Activated CD8-positive, alpha-beta T cell treated with anti-CD3 and anti-CD28 coated beads for 36 hours (primary cell): ENCODE measurements at regions of chr5 and their contacts with region 1.

Region 1: DNA sequence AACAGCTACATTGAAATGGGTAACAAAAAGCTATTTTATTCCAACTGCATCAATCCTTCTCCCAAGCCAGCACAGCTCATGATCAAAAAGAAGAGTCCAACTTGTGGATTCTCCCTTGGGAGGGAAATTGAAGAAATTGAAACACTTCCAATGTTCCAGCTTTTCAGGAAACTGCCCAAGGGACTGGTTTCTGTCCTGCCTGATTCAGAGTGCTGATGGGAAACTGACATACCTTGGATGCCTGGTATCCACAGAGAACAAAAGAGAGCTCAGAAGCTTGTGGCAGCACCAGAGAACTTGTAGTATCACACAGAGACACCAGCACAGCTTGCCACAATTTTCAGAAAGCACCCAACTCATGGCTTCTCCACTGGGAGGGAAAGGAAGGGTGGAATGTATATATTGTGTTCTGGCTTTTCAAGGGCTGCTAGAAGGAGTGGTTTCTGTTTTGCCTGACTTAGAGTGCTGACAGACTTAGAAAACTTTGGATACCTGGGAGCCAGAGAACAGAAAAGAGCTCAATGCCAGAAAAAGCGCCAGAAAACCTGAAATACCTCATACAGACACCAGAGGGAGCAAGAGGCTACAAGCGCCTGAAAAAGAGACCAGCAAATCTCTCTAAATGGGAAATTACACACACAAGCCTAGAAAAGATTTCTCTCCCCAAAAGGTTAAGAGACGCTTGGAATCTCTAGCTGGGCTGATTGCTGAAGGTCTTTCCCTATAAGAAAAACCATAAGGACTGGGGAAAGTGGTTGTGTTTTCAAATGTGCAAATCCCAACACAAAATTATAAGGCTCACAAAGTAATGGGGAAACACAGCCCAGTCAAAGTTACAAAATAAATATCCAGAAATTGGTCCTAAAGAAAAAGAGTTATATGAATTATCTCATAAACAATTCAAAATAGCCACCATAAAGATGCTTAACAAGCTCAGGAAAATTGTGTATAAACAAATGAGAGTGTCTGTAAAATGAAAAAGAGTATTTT is 178.8 kb downstream of the SPOCK1 start:
- DNase-seq: peak; percentile 27
- ATAC-seq: no peak
- H3K4me3 Mint-ChIP-seq: no peak overlapping the region
- H3K27ac Mint-ChIP-seq: no peak overlapping the region
- H3K4me1 Mint-ChIP-seq: no peaks in the 10 kb centered on the region
- H3K27me3 Mint-ChIP-seq: peaks cover 7% of the 10 kb centered on the region
- CTCF ChIP-seq: peak; percentile 58

Region 2: DNA sequence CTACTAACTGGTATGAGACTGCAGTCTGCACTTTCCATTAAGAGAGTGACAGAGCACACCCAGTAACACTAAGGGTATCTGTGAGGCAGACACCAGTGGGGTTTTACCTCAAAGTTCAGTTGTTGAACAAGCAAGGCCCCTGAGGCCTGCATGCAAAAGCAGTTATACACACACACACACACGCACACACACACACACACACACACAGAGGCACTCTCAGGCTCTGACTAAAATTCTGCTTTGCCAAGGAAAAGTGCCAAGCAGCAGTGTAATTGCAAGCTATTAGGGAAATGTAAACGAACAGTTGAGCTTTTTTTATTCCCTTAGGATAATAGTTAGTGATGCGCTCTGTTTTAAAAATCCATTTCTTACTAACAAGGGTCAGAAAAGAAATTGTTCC is 198.3 kb before region 1 on chr5:
- CTCF ChIA-PET with region 1: no interaction called
- POLR2A ChIA-PET with region 1: no interaction called
- intact Hi-C with region 1: no loop called
- DNase-seq: no peak
- ATAC-seq: no peak
- H3K4me3 Mint-ChIP-seq: no peak overlapping the region
- H3K27ac Mint-ChIP-seq: no peak overlapping the region
- H3K4me1 Mint-ChIP-seq: no peaks in the 10 kb centered on the region
- H3K27me3 Mint-ChIP-seq: peaks cover 4% of the 10 kb centered on the region
- CTCF ChIP-seq: no peak

Region 3: GRCh38 chr5:137336565-137337120 is 16.3 kb after region 1 on chr5:
- CTCF ChIA-PET with region 1: interaction called, 10 read pairs
- POLR2A ChIA-PET with region 1: no interaction called
- intact Hi-C with region 1: no loop called
- DNase-seq: no peak
- ATAC-seq: no peak
- H3K4me3 Mint-ChIP-seq: no peak overlapping the region
- H3K27ac Mint-ChIP-seq: no peak overlapping the region
- H3K4me1 Mint-ChIP-seq: no peaks in the 10 kb centered on the region
- H3K27me3 Mint-ChIP-seq: peaks cover 1% of the 10 kb centered on the region
- CTCF ChIP-seq: no peak

Region 4: GRCh38 chr5:137344723-137345322 is 24.5 kb after region 1 on chr5:
- CTCF ChIA-PET with region 1: interaction called, 15 read pairs
- POLR2A ChIA-PET with region 1: no interaction called
- intact Hi-C with region 1: no loop called
- DNase-seq: peak; percentile 53
- ATAC-seq: no peak
- H3K4me3 Mint-ChIP-seq: no peak overlapping the region
- H3K27ac Mint-ChIP-seq: no peak overlapping the region
- H3K4me1 Mint-ChIP-seq: no peaks in the 10 kb centered on the region
- H3K27me3 Mint-ChIP-seq: no peaks in the 10 kb centered on the region
- CTCF ChIP-seq: peak; percentile 88

Region 5: GRCh38 chr5:137498736-137499505 is 178.6 kb after region 1 on chr5 and contains the start of gene SPOCK1:
- CTCF ChIA-PET with region 1: interaction called, 26 read pairs
- POLR2A ChIA-PET with region 1: no interaction called
- intact Hi-C with region 1: loop called (anchors 5 kb)
- DNase-seq: peak; percentile 70
- ATAC-seq: peak; percentile 95
- H3K4me3 Mint-ChIP-seq: no peak within 1 kb of the TSS
- H3K27ac Mint-ChIP-seq: no peak within 1 kb of the TSS
- H3K4me1 Mint-ChIP-seq: no peaks in the 10 kb centered on the region
- H3K27me3 Mint-ChIP-seq: peaks cover 18% of the 10 kb centered on the region
- CTCF ChIP-seq: peak; percentile 73
- total RNA-seq, gene SPOCK1: not detected